ENCODE measurements at regions of chr16 and their contacts with region 1.

Region 1: GRCh38 chr16:30526823-30527635 is 663 bp upstream of the ZNF768 start:
- DNase-seq: peak; percentile 90 to 99
- H3K4me3 ChIP-seq: peak overlapping the region; percentile 86 to 92
- H3K27ac ChIP-seq: peak overlapping the region; percentile 93 to 96
- H3K4me1 ChIP-seq: peaks cover 0 to 6% of the 10 kb centered on the region in 2 donors
- H3K27me3 ChIP-seq: no peaks in the 10 kb centered on the region
- CTCF ChIP-seq: peak; percentile 14 to 31 (median 28)

Region 2: GRCh38 chr16:30370444-30371247 is 156.4 kb before region 1 on chr16 and contains the start of gene TBC1D10B:
- intact Hi-C with region 1: loop called (anchors 2 kb)
- DNase-seq: peak; percentile 99 to 100
- H3K4me3 ChIP-seq: peak within 1 kb of the TSS; percentile 78 to 82
- H3K27ac ChIP-seq: peak within 1 kb of the TSS; percentile 85 to 88
- H3K4me1 ChIP-seq: peaks cover 13 to 26% of the 10 kb centered on the region in 2 donors
- H3K27me3 ChIP-seq: no peaks in the 10 kb centered on the region
- CTCF ChIP-seq: no peak
- total RNA-seq, gene TBC1D10B: 20.9 TPM

Region 3: GRCh38 chr16:30407102-30407803 is 119.8 kb before region 1 on chr16 and contains the start of gene ZNF771:
- intact Hi-C with region 1: no loop called
- DNase-seq: peak; percentile 70 to 95
- H3K4me3 ChIP-seq: peak within 1 kb of the TSS; percentile 67 to 82
- H3K27ac ChIP-seq: peak within 1 kb of the TSS; percentile 79 to 94
- H3K4me1 ChIP-seq: peaks cover 8 to 16% of the 10 kb centered on the region in 2 donors
- H3K27me3 ChIP-seq: no peaks in the 10 kb centered on the region
- CTCF ChIP-seq: peak in 1 of 3 experiments; percentile 4
- total RNA-seq, gene ZNF771: 49.6 TPM

Region 4: GRCh38 chr16:30429678-30430427 is 97.2 kb before region 1 on chr16 and contains the start of gene DCTPP1:
- intact Hi-C with region 1: loop called (anchors 1 kb)
- DNase-seq: peak; percentile 93 to 97
- H3K4me3 ChIP-seq: peak within 1 kb of the TSS; percentile 64 to 81
- H3K27ac ChIP-seq: peak within 1 kb of the TSS; percentile 67 to 80
- H3K4me1 ChIP-seq: peaks cover 4 to 11% of the 10 kb centered on the region in 2 donors
- H3K27me3 ChIP-seq: no peaks in the 10 kb centered on the region
- CTCF ChIP-seq: peak; percentile 64 to 75 (median 70)
- total RNA-seq, gene DCTPP1: 7.2 TPM

Region 5: DNA sequence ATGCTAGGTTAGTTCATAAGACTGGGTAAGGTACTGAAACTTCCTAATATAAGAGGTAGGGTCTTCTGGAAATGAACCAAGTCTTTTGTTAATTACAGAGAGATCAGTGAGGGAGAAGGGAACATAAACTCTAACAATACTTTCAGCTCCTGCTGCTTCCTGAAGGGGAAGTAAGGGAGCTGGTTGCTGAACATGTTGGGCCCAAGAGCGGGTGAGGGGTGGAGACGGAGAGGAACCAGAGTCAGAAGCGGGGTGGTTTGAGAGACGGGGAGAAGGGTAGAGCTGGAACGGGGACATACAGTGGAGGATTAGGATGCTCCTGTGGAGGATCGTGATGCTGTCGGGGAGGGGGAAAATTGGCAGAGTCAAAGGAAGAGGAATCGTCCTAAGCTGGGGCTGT is 19.1 kb after region 1 on chr16:
- intact Hi-C with region 1: no loop called
- DNase-seq: no peak
- H3K4me3 ChIP-seq: no peak overlapping the region
- H3K27ac ChIP-seq: no peak overlapping the region
- H3K4me1 ChIP-seq: no peaks in the 10 kb centered on the region
- H3K27me3 ChIP-seq: no peaks in the 10 kb centered on the region
- CTCF ChIP-seq: no peak

Region 6: DNA sequence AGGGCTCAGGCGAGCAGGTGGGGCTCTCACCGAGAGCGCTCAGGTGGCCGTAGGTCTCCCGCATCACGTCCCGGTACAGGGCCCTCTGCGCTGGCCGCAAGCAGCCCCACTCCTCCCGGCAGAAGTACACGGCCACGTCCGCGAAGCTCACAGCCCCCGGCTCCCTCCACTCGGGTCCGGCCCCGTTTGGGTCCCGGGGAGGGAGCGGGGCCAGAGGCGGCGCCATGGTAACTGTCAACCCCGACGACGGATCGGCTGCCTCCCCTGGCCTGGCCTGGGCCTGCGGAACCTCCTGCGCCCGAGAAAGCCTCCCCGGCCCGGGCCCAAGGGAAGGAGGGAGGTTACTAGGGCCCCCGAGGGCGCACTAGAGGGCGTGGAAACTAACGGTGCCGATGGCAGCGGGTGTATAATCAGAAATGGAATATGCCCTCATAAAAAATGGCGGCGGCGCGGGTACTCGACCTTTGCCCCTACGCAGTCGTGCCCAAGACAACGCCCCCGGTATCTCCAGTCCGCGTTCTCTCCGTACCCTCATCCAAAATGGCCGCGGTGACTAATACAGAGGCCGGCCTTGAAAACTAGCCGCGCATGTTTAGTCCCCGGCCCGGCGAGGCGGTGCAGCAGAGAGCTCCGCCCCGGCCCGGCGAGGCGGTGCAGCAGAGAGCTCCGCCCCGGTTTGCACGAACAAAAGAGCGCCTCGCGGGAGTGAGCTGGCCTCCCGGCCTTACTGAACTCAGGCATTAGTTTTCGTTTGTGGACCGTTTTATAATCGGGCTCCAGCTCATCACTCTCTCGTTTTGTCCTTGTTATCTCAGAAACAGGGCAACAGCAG is 31.1 kb after region 1 on chr16 and contains the start of gene ZNF764:
- intact Hi-C with region 1: loop called (anchors 2 kb)
- DNase-seq: peak; percentile 96 to 99
- H3K4me3 ChIP-seq: peak within 1 kb of the TSS; percentile 91
- H3K27ac ChIP-seq: peak within 1 kb of the TSS; percentile 92 to 94
- H3K4me1 ChIP-seq: peaks cover 9 to 10% of the 10 kb centered on the region in 2 donors
- H3K27me3 ChIP-seq: no peaks in the 10 kb centered on the region
- CTCF ChIP-seq: peak in 1 of 3 experiments; percentile 1
- total RNA-seq, gene ZNF764: 10.9 TPM

Region 7: DNA sequence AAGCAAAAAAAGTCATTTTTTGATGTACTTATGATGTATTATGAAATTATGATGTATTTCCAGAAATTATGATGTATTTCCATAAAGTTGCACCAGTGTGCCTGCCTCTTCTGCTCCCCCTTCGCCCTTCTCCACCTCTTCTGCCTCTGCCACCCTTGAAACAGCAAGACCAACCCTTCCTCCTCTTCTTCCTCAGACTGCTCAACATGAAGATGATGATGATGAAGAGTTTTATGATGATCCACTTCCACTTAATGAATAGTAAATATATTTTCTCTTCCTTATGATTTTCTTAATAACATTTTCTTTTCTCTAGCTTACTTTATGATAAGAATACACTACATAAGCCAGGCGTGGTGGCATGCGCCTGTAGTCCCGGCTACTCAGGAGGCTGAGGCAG is 65.8 kb after region 1 on chr16:
- intact Hi-C with region 1: no loop called
- DNase-seq: no peak
- H3K4me3 ChIP-seq: no peak overlapping the region
- H3K27ac ChIP-seq: no peak overlapping the region
- H3K4me1 ChIP-seq: no peaks in the 10 kb centered on the region
- H3K27me3 ChIP-seq: no peaks in the 10 kb centered on the region
- CTCF ChIP-seq: no peak

Region 8: GRCh38 chr16:30609926-30610839 is 83.2 kb after region 1 on chr16 and contains the start of gene ZNF689:
- intact Hi-C with region 1: loop called (anchors 2 kb)
- DNase-seq: peak; percentile 73 to 97
- H3K4me3 ChIP-seq: peak within 1 kb of the TSS; percentile 81 to 88
- H3K27ac ChIP-seq: peak within 1 kb of the TSS; percentile 88 to 96
- H3K4me1 ChIP-seq: peaks cover 0 to 10% of the 10 kb centered on the region in 2 donors
- H3K27me3 ChIP-seq: no peaks in the 10 kb centered on the region
- CTCF ChIP-seq: peak in 1 of 3 experiments; percentile 5
- total RNA-seq, gene ZNF689: 7.0 TPM

Measured in ascending aorta (tissue), 2 donors.